PC-3 (cell line): ENCODE measurements at regions of chr11 and their contacts with region 1.

Region 1: GRCh38 chr11:27347361-27348339 is 15.4 kb downstream of the CCDC34 start:
- DNase-seq: peak; percentile 47
- ATAC-seq: peak; percentile 94
- H3K4me3 ChIP-seq: peak overlapping the region; percentile 55; the same call in 1 of the 2 replicates
- H3K27ac ChIP-seq: peak overlapping the region; percentile 44
- H3K4me1 ChIP-seq: peaks cover 14% of the 10 kb centered on the region
- H3K27me3 ChIP-seq: no peaks in the 10 kb centered on the region
- CTCF ChIP-seq: no peak

Region 2: DNA sequence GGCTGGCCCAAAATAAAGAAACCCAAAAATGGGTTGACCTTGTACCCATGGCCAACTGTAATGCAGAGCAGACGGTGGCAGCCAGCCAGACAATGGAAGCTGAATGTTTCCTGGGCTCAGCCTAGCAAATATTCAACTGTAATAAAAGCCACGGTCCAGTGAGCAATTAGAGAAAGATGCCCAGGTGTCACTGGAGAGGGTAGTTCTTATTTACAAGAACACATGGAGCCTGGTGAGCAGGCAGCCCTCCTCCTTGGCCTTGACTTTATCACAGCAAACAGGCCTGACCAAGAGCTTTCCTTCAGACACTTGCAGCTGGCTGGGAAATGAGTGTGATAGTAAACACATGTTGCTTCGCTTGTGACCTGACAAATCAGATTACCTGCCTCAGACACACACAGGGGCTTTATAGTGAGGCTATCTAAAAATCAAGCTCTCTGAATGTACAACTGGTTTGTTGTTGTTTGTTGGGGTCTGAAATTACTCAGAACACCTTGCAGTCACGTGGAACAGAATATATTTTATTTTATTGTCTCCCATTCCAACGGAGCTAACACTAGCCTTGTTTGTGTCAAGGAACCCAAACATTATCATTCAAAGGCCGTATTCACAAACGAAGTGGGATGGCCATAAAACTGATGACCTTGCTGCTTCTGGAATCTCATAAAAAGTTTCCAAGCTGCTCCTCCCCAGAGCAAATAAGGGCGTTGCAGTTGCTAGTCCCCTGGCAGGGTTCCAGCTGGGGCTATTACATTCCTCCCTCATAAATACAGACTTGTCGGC is 146.0 kb before region 1 on chr11:
- CTCF ChIA-PET with region 1: no interaction called
- POLR2A ChIA-PET with region 1: no interaction called
- intact Hi-C with region 1: loop called (anchors 1 kb)
- DNase-seq: peak; percentile 96
- ATAC-seq: peak; percentile 80
- H3K4me3 ChIP-seq: peak overlapping the region; percentile 22; the same call in 1 of the 2 replicates
- H3K27ac ChIP-seq: peak overlapping the region; percentile 91
- H3K4me1 ChIP-seq: peaks cover 36% of the 10 kb centered on the region
- H3K27me3 ChIP-seq: no peaks in the 10 kb centered on the region
- CTCF ChIP-seq: no peak

Region 3: DNA sequence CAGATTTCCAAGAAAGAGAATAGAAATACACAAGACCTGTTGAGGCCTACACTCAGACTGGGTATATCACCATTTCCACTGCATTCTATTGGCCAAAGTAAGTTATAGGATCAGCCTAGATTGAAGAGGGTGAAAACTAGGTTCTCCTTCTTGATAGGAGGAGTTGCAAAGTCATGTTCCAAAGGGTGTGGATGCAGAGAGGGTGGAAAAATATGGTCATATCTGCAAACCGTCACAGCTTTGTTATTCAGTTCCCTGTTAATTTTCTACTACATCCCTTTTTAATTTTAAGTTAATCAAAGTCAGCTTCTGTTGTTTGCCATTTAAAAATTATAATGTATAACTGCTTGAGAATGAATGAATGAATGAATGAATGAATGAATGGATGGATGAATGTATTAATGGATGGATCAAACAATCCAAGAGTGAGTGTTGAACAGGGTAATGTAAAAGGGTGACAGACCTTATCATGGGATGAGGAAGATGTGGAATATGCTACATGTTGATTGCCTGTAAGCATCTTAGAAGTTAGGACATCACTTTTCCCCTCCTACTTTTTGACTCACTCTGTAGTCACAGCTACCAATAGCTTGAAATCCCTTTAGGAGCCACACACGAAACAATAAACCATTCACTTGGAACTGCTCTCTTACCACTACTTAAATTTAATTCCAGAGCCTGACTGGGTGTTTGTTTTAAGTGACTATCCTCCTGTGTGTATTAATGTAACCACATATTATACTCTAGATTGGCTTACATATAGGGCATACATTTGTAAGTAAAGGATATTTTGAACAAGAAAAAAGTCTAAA is 106.1 kb before region 1 on chr11:
- CTCF ChIA-PET with region 1: interaction called, 11 read pairs
- POLR2A ChIA-PET with region 1: no interaction called
- intact Hi-C with region 1: no loop called
- DNase-seq: peak; percentile 84
- ATAC-seq: peak; percentile 97
- H3K4me3 ChIP-seq: no peak overlapping the region
- H3K27ac ChIP-seq: peak overlapping the region; percentile 49
- H3K4me1 ChIP-seq: peaks cover 9% of the 10 kb centered on the region
- H3K27me3 ChIP-seq: no peaks in the 10 kb centered on the region
- CTCF ChIP-seq: no peak

Region 4: GRCh38 chr11:27253224-27253623 is 94.4 kb before region 1 on chr11:
- CTCF ChIA-PET with region 1: no interaction called
- POLR2A ChIA-PET with region 1: no interaction called
- intact Hi-C with region 1: no loop called
- DNase-seq: no peak
- ATAC-seq: no peak
- H3K4me3 ChIP-seq: no peak overlapping the region
- H3K27ac ChIP-seq: no peak overlapping the region
- H3K4me1 ChIP-seq: no peaks in the 10 kb centered on the region
- H3K27me3 ChIP-seq: no peaks in the 10 kb centered on the region
- CTCF ChIP-seq: no peak

Region 5: GRCh38 chr11:27362749-27363575 is 15.3 kb after region 1 on chr11 and contains the start of gene CCDC34:
- CTCF ChIA-PET with region 1: interaction called, 3 read pairs
- POLR2A ChIA-PET with region 1: no interaction called
- intact Hi-C with region 1: loop called (anchors 1 kb)
- DNase-seq: peak; percentile 93
- ATAC-seq: peak; percentile 92
- H3K4me3 ChIP-seq: peak within 1 kb of the TSS; percentile 97
- H3K27ac ChIP-seq: peak within 1 kb of the TSS; percentile 40
- H3K4me1 ChIP-seq: peaks cover 23% of the 10 kb centered on the region
- H3K27me3 ChIP-seq: no peaks in the 10 kb centered on the region
- CTCF ChIP-seq: no peak
- total RNA-seq, gene CCDC34: 9.0 and 11.0 TPM in 2 replicates

Region 6: GRCh38 chr11:27392278-27393114 is 44.8 kb after region 1 on chr11:
- CTCF ChIA-PET with region 1: no interaction called
- POLR2A ChIA-PET with region 1: no interaction called
- intact Hi-C with region 1: loop called (anchors 1 kb)
- DNase-seq: peak; percentile 74
- ATAC-seq: peak; percentile 60
- H3K4me3 ChIP-seq: no peak overlapping the region
- H3K27ac ChIP-seq: peak overlapping the region; percentile 71
- H3K4me1 ChIP-seq: peaks cover 55% of the 10 kb centered on the region
- H3K27me3 ChIP-seq: no peaks in the 10 kb centered on the region
- CTCF ChIP-seq: no peak